ENCODE measurements at regions of chr1 and their contacts with region 1.

Region 1: DNA sequence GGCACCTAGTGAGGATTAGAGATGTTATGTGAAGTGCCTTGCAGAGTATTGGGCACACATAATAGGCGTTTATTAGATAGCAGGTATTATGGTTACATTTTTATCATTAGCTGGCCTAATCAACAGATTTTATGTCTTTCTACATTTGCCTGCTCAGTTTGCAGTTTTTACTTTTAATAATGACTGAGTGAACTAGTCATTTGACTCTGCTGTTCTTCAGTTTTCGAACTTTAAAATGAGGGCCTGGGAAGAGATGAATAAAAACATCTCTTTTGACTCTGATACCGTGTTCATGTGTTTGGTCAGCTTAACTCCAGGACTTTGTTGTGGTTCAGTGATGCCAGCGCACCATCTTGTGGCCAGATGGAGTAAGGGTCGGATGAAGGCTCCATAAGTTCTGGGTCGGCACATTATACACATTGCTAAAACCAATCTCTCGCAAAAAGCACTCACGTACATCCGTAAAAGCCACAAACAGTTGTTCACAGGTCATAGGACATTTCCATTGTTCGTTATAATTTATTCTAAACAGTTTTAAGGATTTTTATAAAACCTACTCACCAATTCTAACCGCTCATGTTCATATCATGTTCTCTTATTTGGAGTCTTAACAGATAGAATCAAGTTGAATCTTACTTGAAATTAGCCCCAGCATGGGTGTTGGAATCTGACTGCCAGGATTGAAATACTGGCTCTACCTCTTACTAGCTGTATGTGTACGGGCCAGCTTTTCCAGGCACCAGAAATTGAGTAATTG is 78.4 kb upstream of the GPR88 start:
- DNase-seq: peak; percentile 42 to 85 (median 61)
- ATAC-seq: peak; percentile 69
- H3K4me3 ChIP-seq: no peak overlapping the region
- H3K4me3 Mint-ChIP-seq: peak overlapping the region; percentile 8
- H3K27ac ChIP-seq: no peak overlapping the region
- H3K27ac Mint-ChIP-seq: peak overlapping the region; percentile 29
- H3K4me1 ChIP-seq: peaks cover 17% of the 10 kb centered on the region
- H3K4me1 Mint-ChIP-seq: peaks cover 55% of the 10 kb centered on the region
- H3K27me3 ChIP-seq: no peaks in the 10 kb centered on the region
- H3K27me3 Mint-ChIP-seq: no peaks in the 10 kb centered on the region
- CTCF ChIP-seq: peak; percentile 57

Region 2: GRCh38 chr1:100037927-100038659 is 421.4 kb before region 1 on chr1:
- CTCF ChIA-PET with region 1: interaction called, 3 read pairs
- POLR2A ChIA-PET with region 1: no interaction called
- intact Hi-C with region 1: loop called (anchors 5 to 10 kb)
- DNase-seq: peak; percentile 77 to 95 (median 87)
- ATAC-seq: peak; percentile 78
- H3K4me3 ChIP-seq: peak overlapping the region; percentile 85 to 94
- H3K4me3 Mint-ChIP-seq: peak overlapping the region; percentile 97
- H3K27ac ChIP-seq: peak overlapping the region; percentile 94 to 99
- H3K27ac Mint-ChIP-seq: peak overlapping the region; percentile 98
- H3K4me1 ChIP-seq: peaks cover 43% of the 10 kb centered on the region
- H3K4me1 Mint-ChIP-seq: peaks cover 52% of the 10 kb centered on the region
- H3K27me3 ChIP-seq: no peaks in the 10 kb centered on the region
- H3K27me3 Mint-ChIP-seq: no peaks in the 10 kb centered on the region
- CTCF ChIP-seq: no peak

Region 3: GRCh38 chr1:100265931-100266740 is 193.4 kb before region 1 on chr1 and contains the start of gene RTCA:
- CTCF ChIA-PET with region 1: interaction called, 13 read pairs
- POLR2A ChIA-PET with region 1: interaction called, 7 read pairs
- intact Hi-C with region 1: no loop called
- DNase-seq: peak; percentile 85 to 98 (median 97)
- ATAC-seq: peak; percentile 94
- H3K4me3 ChIP-seq: peak within 1 kb of the TSS; percentile 80 to 94
- H3K4me3 Mint-ChIP-seq: peak within 1 kb of the TSS; percentile 100
- H3K27ac ChIP-seq: peak within 1 kb of the TSS; percentile 68 to 78
- H3K27ac Mint-ChIP-seq: peak within 1 kb of the TSS; percentile 98
- H3K4me1 ChIP-seq: peaks cover 29% of the 10 kb centered on the region
- H3K4me1 Mint-ChIP-seq: peaks cover 47% of the 10 kb centered on the region
- H3K27me3 ChIP-seq: no peaks in the 10 kb centered on the region
- H3K27me3 Mint-ChIP-seq: no peaks in the 10 kb centered on the region
- CTCF ChIP-seq: no peak
- total RNA-seq, gene RTCA: 36.2 to 37.7 TPM

Region 4: DNA sequence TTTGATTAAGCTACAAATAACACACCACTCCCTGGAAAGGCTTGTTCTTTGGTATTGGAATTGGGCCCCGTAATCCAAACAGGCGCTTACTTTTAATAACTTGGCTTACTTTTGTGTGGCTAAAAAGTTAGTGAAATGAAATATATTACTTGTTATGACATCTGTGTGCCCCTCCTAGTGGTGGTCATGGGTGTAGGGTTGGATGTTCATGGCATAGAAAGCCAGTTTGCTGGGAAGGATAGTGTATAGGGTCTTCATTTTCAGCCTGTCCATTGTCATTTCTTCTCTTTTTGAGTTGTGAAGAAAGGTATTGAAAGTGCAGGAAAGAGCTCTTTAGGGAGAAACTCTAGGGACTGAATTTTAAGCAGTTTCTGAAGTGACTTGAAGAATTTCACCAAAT is 101.3 kb before region 1 on chr1:
- CTCF ChIA-PET with region 1: interaction called, 82 read pairs
- POLR2A ChIA-PET with region 1: interaction called, 9 read pairs
- intact Hi-C with region 1: loop called (anchors 1 to 5 kb)
- DNase-seq: peak in 2 of 9 experiments; percentile 47 to 61
- ATAC-seq: peak; percentile 40
- H3K4me3 ChIP-seq: no peak overlapping the region
- H3K4me3 Mint-ChIP-seq: peak overlapping the region; percentile 47
- H3K27ac ChIP-seq: no peak overlapping the region
- H3K27ac Mint-ChIP-seq: peak overlapping the region; percentile 52
- H3K4me1 ChIP-seq: peaks cover 73% of the 10 kb centered on the region
- H3K4me1 Mint-ChIP-seq: peaks cover 90% of the 10 kb centered on the region
- H3K27me3 ChIP-seq: no peaks in the 10 kb centered on the region
- H3K27me3 Mint-ChIP-seq: no peaks in the 10 kb centered on the region
- CTCF ChIP-seq: peak; percentile 52

Region 5: DNA sequence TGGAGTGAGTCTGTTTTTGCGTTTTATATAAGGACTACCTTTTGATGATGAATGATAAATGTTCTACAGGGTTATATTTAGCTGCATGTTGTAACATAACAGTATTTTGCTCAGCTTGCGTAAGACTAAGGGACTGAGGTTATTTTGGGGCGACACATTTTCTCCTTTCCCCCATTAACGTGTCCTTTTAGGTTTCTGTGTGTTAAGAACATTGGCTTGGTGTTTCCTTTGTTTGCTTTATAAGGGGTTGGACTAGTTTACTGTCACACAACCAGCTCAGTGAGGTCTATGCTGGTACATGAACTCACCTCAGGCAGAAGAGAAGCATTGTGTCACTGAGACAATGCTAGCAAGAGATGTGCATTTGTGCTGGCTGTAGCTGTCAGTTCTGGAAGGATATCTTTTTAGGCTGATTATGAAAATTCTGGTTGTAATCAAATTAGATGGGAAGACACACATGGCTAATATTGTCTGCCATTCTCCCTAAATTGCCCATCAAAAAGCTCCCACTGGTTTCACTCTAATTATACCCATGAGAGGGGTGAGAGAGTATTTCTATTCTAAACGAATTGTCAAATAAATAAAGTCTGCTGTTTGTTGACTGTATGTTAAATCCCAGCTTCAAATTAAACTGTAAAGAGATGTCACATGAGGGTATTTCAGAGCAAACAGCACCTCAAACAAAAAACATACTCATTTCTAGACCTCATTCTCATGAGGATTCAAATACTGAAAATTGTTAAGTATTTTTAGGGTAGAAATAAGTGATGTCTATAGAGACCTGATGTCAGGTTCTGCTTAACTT is 44.6 kb before region 1 on chr1:
- CTCF ChIA-PET with region 1: interaction called, 19 read pairs
- POLR2A ChIA-PET with region 1: interaction called, 8 read pairs
- intact Hi-C with region 1: loop called in 1 of 2 experiments (anchors 5 kb)
- DNase-seq: peak in 4 of 9 experiments; percentile 7 to 73 (median 37)
- ATAC-seq: peak; percentile 85
- H3K4me3 ChIP-seq: no peak overlapping the region
- H3K4me3 Mint-ChIP-seq: peak overlapping the region; percentile 35
- H3K27ac ChIP-seq: peak overlapping the region in 1 of 2 experiments; percentile 59
- H3K27ac Mint-ChIP-seq: peak overlapping the region; percentile 81
- H3K4me1 ChIP-seq: peaks cover 49% of the 10 kb centered on the region
- H3K4me1 Mint-ChIP-seq: peaks cover 83% of the 10 kb centered on the region
- H3K27me3 ChIP-seq: no peaks in the 10 kb centered on the region
- H3K27me3 Mint-ChIP-seq: no peaks in the 10 kb centered on the region
- CTCF ChIP-seq: no peak

Region 6: GRCh38 chr1:100469578-100469977 is 10.0 kb after region 1 on chr1:
- CTCF ChIA-PET with region 1: interaction called, 14 read pairs
- POLR2A ChIA-PET with region 1: interaction called, 3 read pairs
- intact Hi-C with region 1: no loop called
- DNase-seq: no peak
- ATAC-seq: no peak
- H3K4me3 ChIP-seq: no peak overlapping the region
- H3K4me3 Mint-ChIP-seq: no peak overlapping the region
- H3K27ac ChIP-seq: no peak overlapping the region
- H3K27ac Mint-ChIP-seq: no peak overlapping the region
- H3K4me1 ChIP-seq: no peaks in the 10 kb centered on the region
- H3K4me1 Mint-ChIP-seq: peaks cover 36% of the 10 kb centered on the region
- H3K27me3 ChIP-seq: no peaks in the 10 kb centered on the region
- H3K27me3 Mint-ChIP-seq: no peaks in the 10 kb centered on the region
- CTCF ChIP-seq: no peak

Region 7: DNA sequence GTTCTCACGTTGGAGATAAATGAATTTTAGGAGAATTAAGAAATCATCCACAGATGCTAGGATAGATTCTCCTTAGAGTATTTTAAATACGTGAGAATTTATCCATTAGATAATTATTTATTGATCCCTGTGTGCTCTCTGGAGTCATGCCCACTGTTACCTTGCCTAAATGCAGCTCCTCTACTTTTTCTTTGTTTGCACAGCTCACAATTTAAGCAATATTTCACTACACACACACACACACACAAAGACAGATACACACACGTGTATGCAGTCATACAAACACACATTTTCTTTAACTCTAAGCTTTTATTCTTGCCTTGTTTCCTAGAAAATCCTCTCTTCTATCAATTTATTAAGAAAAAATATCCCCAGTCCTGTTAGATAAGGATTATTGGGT is 130.1 kb after region 1 on chr1:
- CTCF ChIA-PET with region 1: no interaction called
- POLR2A ChIA-PET with region 1: no interaction called
- intact Hi-C with region 1: no loop called
- DNase-seq: no peak
- ATAC-seq: no peak
- H3K4me3 ChIP-seq: no peak overlapping the region
- H3K4me3 Mint-ChIP-seq: no peak overlapping the region
- H3K27ac ChIP-seq: no peak overlapping the region
- H3K27ac Mint-ChIP-seq: no peak overlapping the region
- H3K4me1 ChIP-seq: no peaks in the 10 kb centered on the region
- H3K4me1 Mint-ChIP-seq: no peaks in the 10 kb centered on the region
- H3K27me3 ChIP-seq: no peaks in the 10 kb centered on the region
- H3K27me3 Mint-ChIP-seq: no peaks in the 10 kb centered on the region
- CTCF ChIP-seq: no peak

Region 8: DNA sequence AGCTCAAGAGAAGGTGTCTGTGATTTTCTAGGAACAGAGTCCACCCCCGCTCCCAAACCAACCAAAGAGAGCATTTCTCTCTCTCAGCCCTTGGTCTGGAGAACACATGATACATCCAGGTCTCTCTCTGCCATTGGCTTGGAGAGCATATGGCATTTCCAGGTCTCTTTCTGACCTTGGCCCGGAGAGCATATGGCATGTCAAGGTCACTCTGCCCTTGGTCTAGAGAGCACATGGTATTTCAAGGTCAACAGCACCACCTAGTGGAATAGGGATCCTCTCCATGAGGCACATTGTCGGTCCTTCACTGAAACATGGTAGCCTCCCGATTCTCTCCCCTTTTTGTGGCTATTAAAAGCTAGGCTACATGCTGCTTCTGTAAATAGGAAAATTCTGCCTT is 1974.9 kb after region 1 on chr1:
- CTCF ChIA-PET with region 1: no interaction called
- POLR2A ChIA-PET with region 1: no interaction called
- intact Hi-C with region 1: no loop called
- DNase-seq: peak in 1 of 9 experiments; percentile 1
- ATAC-seq: no peak
- H3K4me3 ChIP-seq: no peak overlapping the region
- H3K4me3 Mint-ChIP-seq: no peak overlapping the region
- H3K27ac ChIP-seq: no peak overlapping the region
- H3K27ac Mint-ChIP-seq: no peak overlapping the region
- H3K4me1 ChIP-seq: no peaks in the 10 kb centered on the region
- H3K4me1 Mint-ChIP-seq: no peaks in the 10 kb centered on the region
- H3K27me3 ChIP-seq: no peaks in the 10 kb centered on the region
- H3K27me3 Mint-ChIP-seq: no peaks in the 10 kb centered on the region
- CTCF ChIP-seq: no peak

Measured in CD8-positive, alpha-beta T cell (primary cell).